Activated CD4-positive, alpha-beta memory T cell treated with anti-CD3 and anti-CD28 coated beads, Interleukin-2, amount 10 ng/mL, durations not matched to agents 7 days and 5 days (primary cell): ENCODE measurements at regions of chr9 and their contacts with region 1.

Region 1: GRCh38 chr9:98791147-98792095 is 4.9 kb downstream of the ANKS6 start:
- DNase-seq: peak; percentile 73
- H3K4me3 Mint-ChIP-seq: no peak overlapping the region
- H3K27ac Mint-ChIP-seq: no peak overlapping the region
- H3K4me1 Mint-ChIP-seq: peaks cover 18% of the 10 kb centered on the region
- H3K27me3 Mint-ChIP-seq: peaks cover 8% of the 10 kb centered on the region

Region 2: GRCh38 chr9:98536542-98537173 is 254.8 kb before region 1 on chr9:
- CTCF ChIA-PET with region 1: interaction called, 10 read pairs
- POLR2A ChIA-PET with region 1: no interaction called
- DNase-seq: peak; percentile 48
- H3K4me3 Mint-ChIP-seq: no peak overlapping the region
- H3K27ac Mint-ChIP-seq: no peak overlapping the region
- H3K4me1 Mint-ChIP-seq: no peaks in the 10 kb centered on the region
- H3K27me3 Mint-ChIP-seq: peaks cover 13% of the 10 kb centered on the region

Region 3: DNA sequence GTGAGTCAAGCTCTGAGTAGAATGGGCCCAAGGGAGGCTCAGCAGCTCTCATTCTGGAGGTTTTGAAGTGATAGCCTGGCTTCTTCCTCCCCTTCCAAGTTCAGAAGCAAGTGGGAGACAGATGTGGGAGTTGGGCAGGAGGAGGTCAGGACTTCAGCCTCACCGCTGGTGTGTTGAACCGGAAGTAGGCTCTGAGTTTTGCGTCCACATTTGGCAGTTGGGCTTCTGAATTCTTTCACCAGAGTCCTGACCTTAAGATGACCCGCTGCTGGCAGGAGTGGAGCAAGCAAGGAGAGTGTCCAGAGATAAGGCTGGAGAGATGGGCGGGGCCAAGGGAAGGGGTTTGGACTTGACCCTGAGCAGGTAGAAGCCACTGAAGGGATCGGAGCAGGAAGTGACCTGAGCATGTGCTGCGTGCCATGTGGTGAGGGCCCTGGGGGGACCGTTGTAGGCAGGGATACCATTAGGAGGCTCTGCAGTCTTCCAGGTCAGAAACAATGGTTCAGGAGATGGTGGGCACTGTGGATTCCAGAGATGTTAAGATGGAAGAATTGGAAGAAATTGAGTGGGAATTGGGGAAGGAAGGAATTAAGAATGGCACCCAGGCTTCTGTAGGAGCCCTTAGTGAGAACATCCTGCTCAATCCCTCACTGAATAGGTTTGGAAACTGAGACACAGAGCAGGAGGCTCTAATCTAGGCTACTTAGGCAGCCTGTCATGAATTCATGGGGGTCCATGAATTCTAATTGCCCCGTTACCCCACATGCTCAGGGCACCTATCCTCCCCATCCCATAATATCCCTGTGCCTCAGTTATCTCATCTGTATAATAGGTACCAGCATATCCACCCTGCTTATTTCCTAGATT is 41.9 kb after region 1 on chr9:
- CTCF ChIA-PET with region 1: no interaction called
- POLR2A ChIA-PET with region 1: no interaction called
- DNase-seq: no peak
- H3K4me3 Mint-ChIP-seq: no peak overlapping the region
- H3K27ac Mint-ChIP-seq: no peak overlapping the region
- H3K4me1 Mint-ChIP-seq: no peaks in the 10 kb centered on the region
- H3K27me3 Mint-ChIP-seq: no peaks in the 10 kb centered on the region